HEK293 (cell line): ENCODE measurements at regions of chr3 and their contacts with region 1.

Region 1: GRCh38 chr3:73502609-73503583 is 121.8 kb downstream of the PDZRN3 start:
- H3K4me3 ChIP-seq: no peak overlapping the region
- H3K27ac ChIP-seq: no peak overlapping the region
- H3K4me1 ChIP-seq: no peaks in the 10 kb centered on the region
- CTCF ChIP-seq: peak; percentile 41; the same call in 1 of the 2 replicates

Region 2: DNA sequence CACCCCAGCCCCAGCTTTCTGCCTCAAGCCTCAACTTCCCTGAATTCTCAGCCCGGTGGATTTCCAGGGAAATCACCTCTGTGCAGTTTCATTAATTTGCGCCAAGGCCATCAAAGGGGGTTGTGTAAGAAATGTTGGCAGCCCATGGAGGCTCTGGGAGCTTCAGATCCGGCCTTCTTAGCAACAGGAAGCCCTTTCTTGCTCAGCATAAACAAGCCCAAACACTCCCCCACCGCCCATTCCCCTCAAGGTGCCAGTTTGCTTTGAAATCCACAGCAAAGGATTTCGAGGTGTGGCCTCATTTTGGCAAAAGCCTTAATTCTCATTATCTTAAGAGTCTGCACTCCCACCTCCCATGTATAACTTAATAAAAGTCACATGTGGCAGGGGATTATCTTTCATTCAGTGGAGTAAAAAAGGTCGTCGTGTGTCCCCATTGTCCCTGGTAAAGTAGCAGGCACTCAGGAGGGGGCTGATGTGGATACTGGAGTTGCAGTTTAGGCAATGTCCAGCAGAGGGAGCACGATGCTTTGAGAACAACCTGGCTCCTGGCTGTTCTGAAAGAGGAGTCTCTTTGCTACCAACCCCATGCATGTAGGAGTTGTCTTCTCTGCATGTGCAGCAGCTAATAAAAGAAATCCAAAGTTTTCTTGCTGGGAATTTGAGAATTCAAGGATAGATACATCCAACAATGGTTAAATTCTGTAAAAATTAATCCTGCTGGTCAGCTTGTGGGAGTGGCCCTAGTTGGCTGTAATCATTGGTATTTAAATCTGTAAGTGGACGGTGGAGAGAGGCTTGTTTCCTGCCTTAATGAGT is 401.9 kb before region 1 on chr3:
- CTCF ChIA-PET with region 1: interaction called, 30 read pairs
- POLR2A ChIA-PET with region 1: no interaction called
- H3K4me3 ChIP-seq: no peak overlapping the region
- H3K27ac ChIP-seq: no peak overlapping the region
- H3K4me1 ChIP-seq: no peaks in the 10 kb centered on the region
- CTCF ChIP-seq: peak; percentile 47; the same call in 1 of the 2 replicates

Region 3: DNA sequence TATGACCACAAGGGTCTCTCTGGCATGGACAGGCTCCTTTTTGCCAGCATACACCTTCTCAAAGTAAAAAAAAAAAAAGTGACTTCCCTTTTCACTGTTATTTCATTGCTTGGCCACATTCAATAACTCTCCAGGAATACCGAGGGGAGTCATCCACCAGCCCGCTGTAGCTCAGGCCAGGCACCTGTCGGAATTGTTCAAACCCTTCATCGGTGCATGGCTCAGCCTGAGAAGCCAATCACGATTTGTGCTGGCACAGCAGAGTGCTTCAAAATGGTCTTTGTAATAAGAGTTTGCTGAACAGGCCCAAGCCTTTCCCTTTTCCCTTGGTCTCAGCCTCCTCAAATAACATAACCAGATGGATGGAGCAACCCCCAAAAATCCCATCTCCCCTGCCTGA is 23.6 kb before region 1 on chr3:
- CTCF ChIA-PET with region 1: no interaction called
- POLR2A ChIA-PET with region 1: no interaction called
- H3K4me3 ChIP-seq: no peak overlapping the region
- H3K27ac ChIP-seq: no peak overlapping the region
- H3K4me1 ChIP-seq: no peaks in the 10 kb centered on the region
- CTCF ChIP-seq: no peak